CD8-positive, alpha-beta memory T cell (primary cell): ENCODE measurements at regions of chr2 and their contacts with region 1.

Region 1: GRCh38 chr2:85288244-85288725 is 39.5 kb downstream of the TGOLN2 start:
- DNase-seq: no peak
- H3K4me3 ChIP-seq: no peak overlapping the region
- H3K4me3 Mint-ChIP-seq: no peak overlapping the region
- H3K27ac ChIP-seq: no peak overlapping the region
- H3K27ac Mint-ChIP-seq: peak overlapping the region in 1 of 8 donors; percentile 28
- H3K4me1 ChIP-seq: peaks cover 8% of the 10 kb centered on the region
- H3K4me1 Mint-ChIP-seq: peaks cover 19 to 25% (median 21%) of the 10 kb centered on the region in 3 donors
- H3K27me3 ChIP-seq: no peaks in the 10 kb centered on the region
- H3K27me3 Mint-ChIP-seq: peaks cover 2 to 4% of the 10 kb centered on the region in 2 donors

Region 2: GRCh38 chr2:85266146-85267041 is 21.9 kb before region 1 on chr2:
- CTCF ChIA-PET with region 1: interaction called, 130 read pairs
- POLR2A ChIA-PET with region 1: interaction called, 4 read pairs
- DNase-seq: peak; percentile 41 to 77 (median 62)
- H3K4me3 ChIP-seq: no peak overlapping the region
- H3K4me3 Mint-ChIP-seq: peak overlapping the region in 1 of 7 donors; percentile 41
- H3K27ac ChIP-seq: no peak overlapping the region
- H3K27ac Mint-ChIP-seq: peak overlapping the region in 1 of 8 donors; percentile 54
- H3K4me1 ChIP-seq: no peaks in the 10 kb centered on the region
- H3K4me1 Mint-ChIP-seq: no peaks in the 10 kb centered on the region
- H3K27me3 ChIP-seq: no peaks in the 10 kb centered on the region
- H3K27me3 Mint-ChIP-seq: peaks cover 15 to 19% of the 10 kb centered on the region in 2 donors

Region 3: DNA sequence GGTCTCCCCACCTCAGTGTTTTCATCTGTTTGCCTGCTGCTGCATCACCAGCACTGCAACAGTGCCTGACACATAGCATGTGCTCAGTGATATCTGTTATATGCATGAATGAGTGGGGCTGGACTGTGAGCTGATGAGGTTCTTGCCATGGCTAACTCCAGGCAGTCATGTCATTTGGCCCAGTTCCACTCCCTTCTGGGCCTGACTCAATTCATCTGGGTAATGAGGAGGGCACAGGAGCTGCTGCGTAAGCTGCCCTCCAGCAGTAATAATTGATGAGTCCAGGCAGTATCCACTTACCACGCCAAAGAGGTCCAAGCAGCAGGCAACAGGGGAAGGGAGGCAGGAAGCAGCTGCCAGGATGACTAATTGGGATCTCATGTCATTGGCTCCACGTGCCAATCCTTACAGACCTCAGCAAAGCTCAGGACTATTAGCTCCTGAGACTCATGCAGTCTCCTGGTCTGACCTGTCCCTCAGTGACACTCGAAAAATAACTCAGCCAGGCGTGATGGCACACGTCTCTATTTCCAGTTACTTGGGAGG is 216.6 kb after region 1 on chr2:
- CTCF ChIA-PET with region 1: no interaction called
- POLR2A ChIA-PET with region 1: no interaction called
- DNase-seq: no peak
- H3K4me3 ChIP-seq: no peak overlapping the region
- H3K4me3 Mint-ChIP-seq: no peak overlapping the region
- H3K27ac ChIP-seq: no peak overlapping the region
- H3K27ac Mint-ChIP-seq: no peak overlapping the region
- H3K4me1 ChIP-seq: no peaks in the 10 kb centered on the region
- H3K4me1 Mint-ChIP-seq: no peaks in the 10 kb centered on the region
- H3K27me3 ChIP-seq: no peaks in the 10 kb centered on the region
- H3K27me3 Mint-ChIP-seq: peaks cover 5 to 6% of the 10 kb centered on the region in 2 donors